ENCODE measurements at regions of chr3 and their contacts with region 1.

Region 1: GRCh38 chr3:179147873-179148615 is at the start of gene PIK3CA:
- DNase-seq: peak; percentile 79 to 98 (median 96)
- ATAC-seq: peak; percentile 73 to 81 (median 76)
- H3K4me3 ChIP-seq: peak within 1 kb of the TSS; percentile 81 to 98
- H3K4me3 Mint-ChIP-seq: peak within 1 kb of the TSS in 2 of 3 donors; percentile 95 to 99
- H3K27ac ChIP-seq: peak within 1 kb of the TSS; percentile 85
- H3K27ac Mint-ChIP-seq: peak within 1 kb of the TSS; percentile 96 to 99
- H3K4me1 ChIP-seq: peaks cover 6 to 30% of the 10 kb centered on the region in 2 experiments
- H3K4me1 Mint-ChIP-seq: peaks cover 40 to 42% (median 41%) of the 10 kb centered on the region in 3 donors
- H3K27me3 ChIP-seq: no peaks in the 10 kb centered on the region
- H3K27me3 Mint-ChIP-seq: no peaks in the 10 kb centered on the region
- total RNA-seq, gene PIK3CA: 33.8 to 43.5 (median 34.8) TPM

Region 2: GRCh38 chr3:177249203-177249602 is 1898.8 kb before region 1 on chr3:
- CTCF ChIA-PET with region 1: no interaction called
- POLR2A ChIA-PET with region 1: no interaction called
- DNase-seq: no peak
- ATAC-seq: no peak
- H3K4me3 ChIP-seq: no peak overlapping the region
- H3K4me3 Mint-ChIP-seq: no peak overlapping the region
- H3K27ac ChIP-seq: no peak overlapping the region
- H3K27ac Mint-ChIP-seq: no peak overlapping the region
- H3K4me1 ChIP-seq: no peaks in the 10 kb centered on the region
- H3K4me1 Mint-ChIP-seq: peaks cover 0 to 3% (median 0%) of the 10 kb centered on the region in 3 donors
- H3K27me3 ChIP-seq: no peaks in the 10 kb centered on the region
- H3K27me3 Mint-ChIP-seq: no peaks in the 10 kb centered on the region

Region 3: DNA sequence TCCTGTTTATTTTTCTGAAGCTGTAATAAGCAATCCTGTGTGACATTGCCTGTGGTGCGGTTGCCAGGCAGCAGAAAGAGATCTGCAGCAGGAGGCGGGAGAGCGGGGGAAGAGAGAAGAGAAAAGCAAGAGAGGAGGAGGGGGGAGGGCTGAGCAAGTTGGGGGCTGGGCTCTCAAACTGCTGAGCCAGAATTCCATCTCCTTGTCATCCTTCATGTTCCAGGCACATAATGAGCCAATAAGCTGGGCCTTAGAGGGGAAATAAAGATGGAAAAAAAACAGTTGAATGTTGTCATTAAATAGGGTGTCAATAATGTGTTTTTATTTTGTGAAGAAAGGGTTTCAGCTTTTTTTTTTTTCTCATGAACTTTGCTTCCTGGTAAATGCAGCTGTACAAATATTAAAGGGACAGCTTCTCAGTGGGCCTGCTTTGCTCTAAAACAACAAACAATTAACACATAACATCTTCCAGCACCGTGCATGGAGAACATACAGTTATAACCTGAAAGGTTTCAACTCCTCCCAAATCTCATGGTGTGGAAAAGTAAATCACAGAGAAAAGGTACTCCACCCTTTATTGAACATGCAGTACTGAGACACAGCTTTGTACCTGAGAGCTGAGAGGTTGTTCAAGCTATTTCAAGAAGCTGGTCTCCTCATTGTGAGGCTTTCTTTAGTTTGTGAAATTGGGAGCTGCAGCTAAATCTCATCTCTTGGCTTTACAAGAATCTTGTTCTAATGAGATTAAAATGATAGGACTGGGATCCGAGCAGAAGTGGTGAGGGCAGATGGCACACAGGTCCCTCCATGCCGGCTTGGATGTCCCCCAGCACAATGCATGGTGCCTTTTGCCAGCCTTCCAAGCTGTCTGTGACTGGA is 1062.9 kb before region 1 on chr3:
- CTCF ChIA-PET with region 1: no interaction called
- POLR2A ChIA-PET with region 1: interaction called in 1 of 2 experiments, 10 read pairs
- DNase-seq: peak in 33 of 35 experiments; percentile 24 to 76 (median 51)
- ATAC-seq: peak; percentile 79 to 96 (median 84)
- H3K4me3 ChIP-seq: peak overlapping the region in 1 of 2 donors; percentile 10
- H3K4me3 Mint-ChIP-seq: peak overlapping the region; percentile 14 to 46 (median 42)
- H3K27ac ChIP-seq: no peak overlapping the region
- H3K27ac Mint-ChIP-seq: peak overlapping the region; percentile 56 to 79
- H3K4me1 ChIP-seq: peaks cover 5 to 42% of the 10 kb centered on the region in 2 experiments
- H3K4me1 Mint-ChIP-seq: peaks cover 37 to 52% (median 38%) of the 10 kb centered on the region in 3 donors
- H3K27me3 ChIP-seq: no peaks in the 10 kb centered on the region
- H3K27me3 Mint-ChIP-seq: no peaks in the 10 kb centered on the region